Mammary epithelial cell (primary cell): ENCODE measurements at regions of chr6 and their contacts with region 1.

Region 1: DNA sequence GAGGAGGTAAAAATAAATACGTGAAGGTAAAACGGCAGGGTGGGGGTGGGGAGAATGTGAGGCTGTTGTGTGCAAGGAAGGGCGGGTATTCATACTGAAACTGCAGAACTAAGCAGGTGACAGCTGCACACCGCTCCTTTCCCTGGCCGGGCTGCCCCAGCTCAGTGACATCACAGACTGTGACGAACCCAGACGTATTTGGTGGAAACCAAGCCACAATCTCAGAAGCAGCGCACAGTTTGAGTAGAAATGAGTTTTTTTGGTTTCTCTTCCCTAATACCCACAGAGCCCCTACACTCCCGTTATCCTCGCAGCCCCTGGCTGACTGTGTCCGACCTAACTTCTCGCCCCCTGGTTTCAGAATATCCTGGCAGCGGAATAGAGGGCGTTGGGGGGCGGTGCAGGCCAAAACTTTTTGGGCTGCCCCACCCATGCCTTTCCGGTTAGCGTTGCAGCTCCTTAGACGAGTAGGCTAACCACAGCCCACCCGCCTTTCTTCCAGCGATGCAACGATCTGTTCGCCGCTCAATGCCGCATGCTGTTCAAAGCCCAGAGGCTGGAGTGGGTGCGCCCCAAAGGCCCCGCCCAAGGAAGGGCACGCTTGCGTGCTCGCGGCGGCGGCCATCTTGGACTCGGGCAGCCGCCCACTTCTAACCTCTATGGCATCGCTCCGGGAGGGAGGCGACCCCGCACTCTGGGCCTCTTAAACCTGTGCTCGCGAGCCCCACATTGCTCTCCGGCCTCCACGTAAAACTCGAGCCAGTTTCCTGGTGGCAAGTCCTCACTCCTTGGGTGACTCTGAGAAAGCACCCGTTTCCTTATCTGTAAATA is 9.1 kb downstream of the BAK1 start:
- DNase-seq: peak; percentile 59
- H3K4me3 ChIP-seq: peak overlapping the region; percentile 46 to 57 (median 48)
- H3K27ac ChIP-seq: peak overlapping the region; percentile 75
- H3K4me1 ChIP-seq: peaks cover 18% of the 10 kb centered on the region
- H3K27me3 ChIP-seq: no peaks in the 10 kb centered on the region
- CTCF ChIP-seq: no peak

Region 2: GRCh38 chr6:33521489-33522091 is 49.4 kb before region 1 on chr6:
- CTCF ChIA-PET with region 1: no interaction called
- dilution Hi-C with region 1: loop called (anchors 5 kb)
- in situ Hi-C with region 1: no loop called
- intact Hi-C with region 1: no loop called
- DNase-seq: no peak
- H3K4me3 ChIP-seq: no peak overlapping the region
- H3K27ac ChIP-seq: no peak overlapping the region
- H3K4me1 ChIP-seq: no peaks in the 10 kb centered on the region
- H3K27me3 ChIP-seq: no peaks in the 10 kb centered on the region
- CTCF ChIP-seq: no peak

Region 3: DNA sequence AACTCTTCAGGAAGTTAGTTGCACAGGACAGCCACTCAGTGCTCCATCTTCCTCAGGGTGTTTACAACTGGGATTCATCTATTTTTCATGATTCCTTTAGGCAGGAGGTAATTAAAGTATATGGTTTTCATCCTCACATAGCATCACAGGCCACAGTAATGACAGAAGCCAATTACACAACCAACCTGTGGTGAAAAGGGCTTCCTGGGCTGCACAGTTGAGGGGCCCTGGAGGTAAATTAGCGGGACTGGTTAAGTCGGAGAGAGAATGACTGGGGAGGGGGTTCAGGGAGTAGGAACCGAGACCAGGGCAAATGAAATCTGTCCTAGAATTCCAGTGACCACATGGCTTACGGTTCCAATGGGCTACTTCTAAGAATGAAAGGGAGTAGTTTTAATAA is 27.9 kb before region 1 on chr6:
- CTCF ChIA-PET with region 1: no interaction called
- dilution Hi-C with region 1: no loop called
- in situ Hi-C with region 1: no loop called
- intact Hi-C with region 1: no loop called
- DNase-seq: no peak
- H3K4me3 ChIP-seq: no peak overlapping the region
- H3K27ac ChIP-seq: no peak overlapping the region
- H3K4me1 ChIP-seq: no peaks in the 10 kb centered on the region
- H3K27me3 ChIP-seq: no peaks in the 10 kb centered on the region
- CTCF ChIP-seq: no peak

Region 4: GRCh38 chr6:33557376-33557775 is 13.6 kb before region 1 on chr6:
- CTCF ChIA-PET with region 1: no interaction called
- dilution Hi-C with region 1: no loop called
- in situ Hi-C with region 1: no loop called
- intact Hi-C with region 1: loop called (anchors 1 kb)
- DNase-seq: no peak
- H3K4me3 ChIP-seq: no peak overlapping the region
- H3K27ac ChIP-seq: no peak overlapping the region
- H3K4me1 ChIP-seq: peaks cover 19% of the 10 kb centered on the region
- H3K27me3 ChIP-seq: no peaks in the 10 kb centered on the region
- CTCF ChIP-seq: no peak